ENCODE measurements at regions of chr19 and their contacts with region 1.

Region 1: DNA sequence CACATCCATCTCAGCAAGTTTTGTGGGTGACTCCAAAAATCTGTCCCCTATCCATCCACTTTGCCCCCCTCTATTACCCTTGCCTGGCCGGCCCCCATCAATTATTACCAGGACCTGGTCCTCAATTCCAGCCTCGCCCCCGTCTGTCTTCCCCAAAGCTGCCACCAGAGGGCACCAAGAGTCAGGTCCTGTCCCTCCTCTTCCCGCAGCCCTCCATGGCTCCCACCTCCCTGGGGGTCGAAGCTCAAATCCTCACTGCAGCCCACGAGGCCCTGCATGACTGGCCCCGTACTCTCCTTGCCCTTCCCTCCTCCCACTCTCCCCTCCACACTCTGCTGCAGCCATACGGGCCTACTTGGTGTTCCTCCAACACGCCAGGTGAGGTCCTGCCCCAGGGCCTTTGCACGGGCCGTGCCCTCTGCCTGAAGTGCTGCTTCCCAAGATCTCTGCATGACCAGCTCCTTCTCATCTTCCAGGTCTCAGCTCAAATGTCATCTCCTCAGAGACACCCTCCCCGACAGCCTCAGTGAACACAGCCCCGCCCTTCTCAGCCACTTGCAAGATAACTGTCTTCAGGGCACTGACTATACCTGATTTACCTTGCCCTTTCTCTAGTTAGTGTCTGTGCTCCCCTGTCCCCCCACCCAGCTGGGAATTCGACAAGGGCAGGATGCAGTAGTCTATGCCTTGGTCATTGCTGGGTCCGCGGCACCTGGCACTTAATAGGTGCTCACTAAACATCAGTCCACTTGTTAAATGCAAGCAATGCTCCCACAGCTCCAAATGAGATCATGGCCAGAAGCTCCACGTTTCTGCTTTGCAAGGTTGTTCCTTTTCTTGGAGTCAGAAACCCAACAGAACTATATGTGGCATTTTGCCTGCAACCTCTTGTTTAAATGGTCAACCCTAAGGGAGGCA is 16.8 kb upstream of the SEMA6B start:
- DNase-seq: peak; percentile 89
- ATAC-seq: peak; percentile 23
- H3K4me3 Mint-ChIP-seq: peak overlapping the region; percentile 28; the same call in 1 of the 2 replicates
- H3K27ac Mint-ChIP-seq: peak overlapping the region; percentile 78; the same call in 1 of the 2 replicates
- H3K4me1 Mint-ChIP-seq: peaks cover 25% of the 10 kb centered on the region
- H3K27me3 Mint-ChIP-seq: peaks cover 4% of the 10 kb centered on the region
- CTCF ChIP-seq: peak; percentile 74

Region 2: DNA sequence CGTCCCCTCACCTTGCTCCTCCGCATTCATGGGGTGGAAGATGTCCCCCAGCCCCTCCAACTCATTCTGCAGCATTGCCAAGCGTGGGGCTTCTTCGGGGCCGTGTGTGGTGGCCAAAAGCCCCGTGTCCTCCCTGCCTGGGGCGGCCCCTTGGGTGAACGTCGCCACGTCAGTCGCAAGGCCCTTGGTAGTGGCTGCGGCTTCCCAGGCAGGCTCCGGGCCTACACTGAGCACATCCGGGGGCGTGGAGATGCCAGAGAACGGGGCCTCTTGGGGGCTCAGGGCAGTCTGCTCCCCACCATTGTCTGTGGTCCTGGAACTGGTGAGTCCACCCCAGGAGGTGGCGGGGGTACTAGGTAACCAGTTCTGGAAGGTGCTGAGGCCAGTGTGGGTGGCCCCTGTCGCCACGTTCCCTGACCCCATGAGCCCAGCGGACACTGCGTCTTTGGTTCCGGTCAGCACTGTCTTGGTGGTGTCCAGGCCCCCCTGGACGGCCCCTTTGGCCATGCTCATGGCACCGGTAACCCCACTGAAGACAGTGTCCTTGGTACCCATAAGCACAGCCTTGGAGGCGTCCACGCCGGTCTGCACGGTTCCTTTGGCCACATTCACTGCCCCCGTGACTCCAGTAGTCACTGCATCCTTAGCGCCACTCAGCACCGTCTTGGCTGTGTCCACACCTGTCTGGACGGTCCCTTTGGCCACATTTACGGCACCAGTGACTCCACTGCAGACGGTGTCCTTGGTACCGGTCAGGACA is 65.7 kb before region 1 on chr19:
- CTCF ChIA-PET with region 1: no interaction called
- POLR2A ChIA-PET with region 1: no interaction called
- DNase-seq: no peak
- ATAC-seq: peak; percentile 24
- H3K4me3 Mint-ChIP-seq: no peak overlapping the region
- H3K27ac Mint-ChIP-seq: no peak overlapping the region
- H3K4me1 Mint-ChIP-seq: no peaks in the 10 kb centered on the region
- H3K27me3 Mint-ChIP-seq: peaks cover 82% of the 10 kb centered on the region
- CTCF ChIP-seq: no peak

Region 3: DNA sequence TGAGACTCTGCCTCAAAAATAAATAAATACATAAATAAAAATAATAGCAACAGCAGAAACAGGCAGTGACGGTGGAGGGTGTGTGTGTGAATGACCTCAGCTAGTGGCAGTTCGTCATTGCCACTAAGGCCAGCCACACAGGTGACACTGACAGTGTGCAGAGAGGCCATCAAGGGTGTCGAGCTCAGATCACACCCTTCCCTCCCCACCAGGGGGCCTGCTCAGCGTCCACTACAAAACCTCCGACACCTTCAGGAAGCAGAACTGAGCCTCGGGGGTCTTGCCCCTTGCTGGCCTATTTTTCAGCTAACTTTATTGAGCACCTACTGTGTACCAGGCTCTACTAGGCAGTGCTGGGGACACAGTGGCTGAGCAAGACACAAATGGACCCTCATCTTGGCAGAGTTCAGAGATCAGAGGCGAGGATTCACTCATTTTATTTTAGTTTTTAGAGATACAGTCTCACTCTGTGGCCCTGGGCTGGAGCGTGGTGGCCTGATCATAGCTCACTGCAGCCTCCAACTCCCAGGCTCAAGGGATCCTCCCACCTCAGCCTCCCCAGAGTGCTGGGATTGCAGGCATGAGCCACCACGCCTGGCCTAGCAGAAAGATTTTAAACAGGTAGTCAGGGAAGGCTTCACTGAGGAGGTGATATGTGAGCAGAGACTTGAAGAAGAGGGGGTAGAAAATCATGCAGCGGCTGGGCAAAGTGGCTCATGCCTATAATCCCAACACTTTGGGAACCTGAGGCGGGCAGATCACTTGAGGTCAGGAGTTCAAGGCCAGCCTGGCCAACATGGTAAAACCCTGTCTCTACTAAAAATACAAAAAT is 13.5 kb after region 1 on chr19:
- CTCF ChIA-PET with region 1: interaction called, 20 read pairs
- POLR2A ChIA-PET with region 1: no interaction called
- DNase-seq: no peak
- ATAC-seq: no peak
- H3K4me3 Mint-ChIP-seq: no peak overlapping the region
- H3K27ac Mint-ChIP-seq: peak overlapping the region; percentile 47; the same call in 1 of the 2 replicates
- H3K4me1 Mint-ChIP-seq: peaks cover 21% of the 10 kb centered on the region
- H3K27me3 Mint-ChIP-seq: peaks cover 60% of the 10 kb centered on the region
- CTCF ChIP-seq: no peak

Region 4: GRCh38 chr19:4597975-4598671 is 21.8 kb after region 1 on chr19:
- CTCF ChIA-PET with region 1: interaction called, 48 read pairs
- POLR2A ChIA-PET with region 1: no interaction called
- DNase-seq: peak; percentile 88
- ATAC-seq: peak; percentile 74
- H3K4me3 Mint-ChIP-seq: peak overlapping the region; percentile 80
- H3K27ac Mint-ChIP-seq: no peak overlapping the region
- H3K4me1 Mint-ChIP-seq: peaks cover 10% of the 10 kb centered on the region
- H3K27me3 Mint-ChIP-seq: peaks cover 67% of the 10 kb centered on the region
- CTCF ChIP-seq: no peak

Region 5: DNA sequence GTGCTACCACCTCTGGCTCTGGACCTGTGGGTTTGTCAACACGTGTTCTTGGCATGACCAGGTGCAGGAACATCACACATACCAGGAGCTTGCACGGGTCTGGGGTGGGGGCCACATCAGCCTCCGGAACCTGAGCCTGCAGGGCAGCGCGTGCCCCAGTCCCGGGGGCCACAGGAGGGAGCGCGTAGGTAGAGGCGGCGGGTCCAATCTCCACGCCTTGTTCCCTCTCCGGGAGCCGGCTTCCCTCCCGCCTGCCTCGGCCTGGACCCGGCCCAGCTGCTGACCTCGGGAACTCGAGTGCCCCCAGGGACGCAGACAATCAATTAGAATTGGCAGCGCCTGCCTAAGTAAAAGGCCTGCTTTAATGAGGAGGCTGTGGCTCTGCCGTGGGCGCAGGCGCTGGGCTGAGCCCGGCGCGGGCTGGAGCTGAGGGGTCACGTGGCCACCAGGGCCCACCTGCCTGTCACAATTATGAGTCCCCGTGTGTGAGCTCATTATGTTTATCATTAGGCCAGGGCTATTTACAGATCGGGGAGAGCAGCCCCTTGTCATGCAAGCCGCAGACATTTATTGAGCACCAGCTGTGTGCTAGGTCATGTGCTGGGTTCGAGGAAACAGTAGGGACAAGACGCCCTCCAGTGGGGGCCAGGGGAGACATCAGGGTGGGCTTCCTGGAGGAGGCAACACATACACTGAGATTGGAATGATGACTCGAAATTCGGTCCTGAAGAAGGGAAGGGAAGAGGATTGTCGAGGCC is 30.8 kb after region 1 on chr19:
- CTCF ChIA-PET with region 1: interaction called, 19 read pairs
- POLR2A ChIA-PET with region 1: no interaction called
- DNase-seq: peak; percentile 53
- ATAC-seq: peak; percentile 71
- H3K4me3 Mint-ChIP-seq: peak overlapping the region; percentile 27
- H3K27ac Mint-ChIP-seq: no peak overlapping the region
- H3K4me1 Mint-ChIP-seq: peaks cover 15% of the 10 kb centered on the region
- H3K27me3 Mint-ChIP-seq: peaks cover 30% of the 10 kb centered on the region
- CTCF ChIP-seq: no peak

Region 6: DNA sequence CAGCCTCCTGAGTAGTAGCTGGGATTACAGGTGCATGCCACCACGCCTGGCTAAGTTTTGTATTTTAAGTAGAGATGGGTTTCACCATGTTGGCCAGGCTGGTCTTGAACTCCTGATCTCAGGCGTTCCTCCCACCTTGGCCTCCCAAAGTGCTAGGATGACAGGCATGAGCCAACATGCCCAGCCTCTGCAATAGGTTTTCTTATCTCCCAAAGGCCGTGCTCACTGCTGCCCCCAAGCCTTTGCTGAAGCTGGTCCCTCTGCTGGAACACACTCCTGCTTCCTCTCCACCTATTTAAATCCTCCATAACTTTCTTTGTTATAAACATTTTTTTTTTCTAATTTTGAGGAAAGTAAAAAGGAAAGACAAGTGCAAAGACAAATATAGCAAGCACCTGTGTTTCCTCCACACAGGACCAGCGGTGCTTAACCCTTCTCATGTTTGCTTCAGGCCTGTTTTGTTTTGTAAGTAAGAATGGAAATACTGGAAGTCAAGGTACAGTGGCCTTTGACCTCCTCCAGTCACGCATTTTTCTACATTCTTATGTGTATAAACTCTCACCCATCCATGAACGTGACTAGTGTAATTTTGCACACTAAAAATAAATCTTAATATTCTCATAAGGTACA is 48.6 kb after region 1 on chr19:
- CTCF ChIA-PET with region 1: interaction called, 10 read pairs
- POLR2A ChIA-PET with region 1: no interaction called
- DNase-seq: peak; percentile 62
- ATAC-seq: peak; percentile 71
- H3K4me3 Mint-ChIP-seq: no peak overlapping the region
- H3K27ac Mint-ChIP-seq: no peak overlapping the region; the same call in 1 of the 2 replicates
- H3K4me1 Mint-ChIP-seq: peaks cover 12% of the 10 kb centered on the region
- H3K27me3 Mint-ChIP-seq: peaks cover 5% of the 10 kb centered on the region
- CTCF ChIP-seq: no peak; the same call in 1 of the 2 replicates

Region 7: GRCh38 chr19:4633140-4633967 is 57.1 kb after region 1 on chr19:
- CTCF ChIA-PET with region 1: interaction called, 217 read pairs
- POLR2A ChIA-PET with region 1: interaction called, 6 read pairs
- DNase-seq: peak; percentile 80
- ATAC-seq: peak; percentile 68
- H3K4me3 Mint-ChIP-seq: 0 out of 2 replicates have a peak overlapping the region, but pooled peaks have one; percentile 8
- H3K27ac Mint-ChIP-seq: no peak overlapping the region
- H3K4me1 Mint-ChIP-seq: peaks cover 6% of the 10 kb centered on the region
- H3K27me3 Mint-ChIP-seq: peaks cover 48% of the 10 kb centered on the region
- CTCF ChIP-seq: peak; percentile 90